Right ventricle myocardium inferior (tissue), 1 donor: ENCODE measurements at regions of chr15 and their contacts with region 1.

Region 1: GRCh38 chr15:90954712-90955671 is at the start of gene RCCD1:
- DNase-seq: peak; percentile 98
- ATAC-seq: peak; percentile 93
- total RNA-seq, gene RCCD1: 9.0 TPM

Region 2: DNA sequence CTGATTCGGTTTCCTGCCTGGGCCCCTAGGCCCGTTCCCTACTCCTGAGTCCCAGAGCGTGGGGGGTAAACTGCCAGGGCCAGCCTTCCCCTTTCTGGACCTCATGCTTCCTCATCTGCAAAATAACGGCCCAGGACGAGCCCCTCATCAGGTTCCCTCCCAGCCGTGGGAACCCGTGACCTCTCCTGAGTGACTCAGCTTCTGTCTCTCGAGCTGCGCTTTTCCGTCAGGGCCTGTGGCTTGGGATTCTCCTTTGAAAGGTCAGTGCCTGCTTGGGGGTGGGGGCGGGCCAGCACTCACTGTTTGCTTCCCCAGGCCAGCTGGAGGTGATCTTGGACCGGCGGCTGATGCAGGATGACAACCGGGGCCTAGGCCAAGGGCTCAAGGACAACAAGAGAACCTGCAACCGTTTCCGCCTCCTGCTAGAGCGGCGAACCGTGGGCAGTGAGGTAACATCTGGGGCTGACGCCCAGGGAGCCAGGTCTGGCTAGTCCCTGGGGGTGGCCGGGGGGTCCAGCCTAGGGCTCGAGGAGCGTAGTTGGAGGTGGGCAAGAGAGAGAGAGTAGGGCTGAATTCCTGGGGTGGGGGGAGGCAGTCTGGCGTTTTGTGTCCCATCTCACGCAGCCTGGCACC is 39.1 kb before region 1 on chr15:
- intact Hi-C with region 1: no loop called
- DNase-seq: peak; percentile 90
- ATAC-seq: peak; percentile 77

Region 3: DNA sequence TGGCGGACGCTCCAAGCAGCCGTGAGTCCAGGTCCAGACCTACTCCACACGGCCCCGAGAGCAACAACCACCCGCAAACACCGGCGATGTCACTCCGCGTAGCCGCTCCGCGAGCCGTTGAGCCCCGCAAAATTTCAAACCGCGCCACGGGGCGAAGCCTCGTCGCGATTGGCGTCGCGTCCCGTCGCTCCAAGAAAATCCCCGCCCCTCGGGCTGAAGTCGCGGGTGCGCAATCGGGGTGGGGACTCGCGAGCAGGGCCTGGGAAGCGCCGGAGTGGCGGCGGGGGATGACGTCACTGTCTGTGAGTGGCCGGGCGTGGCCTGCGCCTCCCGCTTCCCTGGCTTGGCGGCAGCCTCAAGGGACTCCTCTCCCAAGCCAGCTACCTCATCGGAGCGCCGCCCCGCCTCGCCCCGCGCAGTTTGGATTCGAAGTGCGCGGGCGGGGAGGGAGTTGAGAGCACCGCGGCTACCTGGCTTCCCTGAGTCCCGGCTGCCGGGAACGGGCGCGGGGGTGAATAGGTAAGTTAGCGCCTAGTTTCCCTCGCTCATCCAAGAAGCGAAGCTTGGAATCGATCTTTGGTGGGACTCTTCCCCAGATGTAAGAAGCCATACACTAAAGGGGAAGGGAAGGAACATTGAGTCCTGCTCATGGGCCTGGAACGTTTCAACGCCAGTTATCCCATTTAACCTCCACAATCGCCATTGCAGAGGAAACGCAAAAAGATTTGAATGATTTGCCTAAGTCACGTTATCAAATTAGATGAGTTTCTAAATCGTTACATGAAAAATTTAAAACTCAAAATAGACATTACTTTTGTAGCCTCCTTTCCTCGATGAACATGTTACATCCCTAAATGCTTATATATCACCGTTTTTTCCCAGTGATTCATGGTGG is 39.7 kb after region 1 on chr15 and contains the start of gene PRC1:
- intact Hi-C with region 1: loop called (anchors 5 kb)
- DNase-seq: peak; percentile 99
- ATAC-seq: peak; percentile 100
- total RNA-seq, gene PRC1: 4.0 TPM

Region 4: GRCh38 chr15:91022075-91022835 is 67.3 kb after region 1 on chr15 and contains the start of gene VPS33B:
- intact Hi-C with region 1: loop called (anchors 10 kb)
- DNase-seq: peak; percentile 90
- ATAC-seq: peak; percentile 91
- total RNA-seq, gene VPS33B: 4.2 TPM

Region 5: DNA sequence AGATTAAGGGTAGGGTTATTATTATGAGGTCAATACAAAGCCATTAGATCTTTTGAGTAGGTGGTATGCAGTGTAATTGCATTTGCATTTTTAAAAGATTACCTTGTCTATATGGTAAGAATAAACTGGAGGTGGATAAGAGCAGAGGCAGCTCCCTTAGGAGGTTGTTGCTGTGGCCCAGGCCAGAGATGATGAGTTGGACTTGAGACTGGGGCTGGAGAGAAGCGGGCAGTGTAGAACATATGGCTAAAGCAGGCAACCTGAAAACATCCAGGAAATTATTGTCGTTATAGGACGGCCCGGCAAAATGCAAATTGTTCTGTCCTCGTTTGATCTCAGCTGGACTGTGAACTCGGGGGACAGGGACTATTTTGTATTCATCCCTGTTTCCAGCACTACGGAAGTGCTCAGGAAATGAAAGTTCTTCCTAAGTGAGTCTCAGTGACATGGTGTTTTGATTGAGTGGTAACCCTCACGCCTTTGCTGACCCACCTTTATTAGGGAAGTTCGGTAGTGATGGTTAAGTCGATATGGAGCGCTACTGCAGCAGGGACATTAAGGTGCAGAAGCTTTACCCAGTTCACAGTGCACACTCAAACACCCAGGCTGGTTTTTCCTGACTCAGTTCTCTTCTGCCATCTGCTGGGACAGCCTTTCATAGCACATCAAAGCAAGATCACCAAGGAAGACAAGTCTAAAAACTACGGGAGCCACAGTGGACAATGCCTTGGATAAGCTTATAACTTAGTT is 94.6 kb after region 1 on chr15:
- intact Hi-C with region 1: loop called (anchors 2 kb)
- DNase-seq: peak; percentile 25
- ATAC-seq: peak; percentile 84

Region 6: DNA sequence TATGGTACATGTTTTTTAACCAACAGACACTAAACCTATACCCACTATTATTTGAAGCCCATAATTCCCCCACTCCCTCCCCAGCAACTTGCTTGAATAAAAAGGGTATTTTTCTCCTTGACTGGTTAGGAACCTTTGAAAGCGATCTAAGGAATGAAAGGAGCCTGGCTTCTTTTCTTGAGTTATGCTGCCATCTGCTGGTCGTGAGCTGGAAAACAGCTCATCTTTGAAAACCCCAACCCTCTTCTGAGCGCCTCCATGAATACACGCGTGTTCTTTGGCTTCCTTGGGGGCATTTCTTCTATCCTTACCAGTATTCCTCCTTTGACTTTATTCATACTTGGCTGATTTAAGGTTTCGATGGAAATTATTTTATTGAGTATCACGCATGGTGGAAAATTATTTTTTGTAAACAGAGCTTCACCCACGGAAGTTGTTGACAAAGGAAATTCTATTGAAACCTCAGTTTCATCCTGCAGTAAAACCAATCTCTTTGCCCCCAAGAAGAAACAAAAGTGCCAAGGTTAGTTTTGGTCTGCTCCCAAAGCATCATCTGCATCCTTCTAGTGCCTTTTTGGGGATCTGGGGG is 316.7 kb after region 1 on chr15:
- intact Hi-C with region 1: loop called (anchors 5 kb)
- DNase-seq: no peak
- ATAC-seq: peak; percentile 57